ENCODE measurements at regions of chr1 and their contacts with region 1.

Region 1: DNA sequence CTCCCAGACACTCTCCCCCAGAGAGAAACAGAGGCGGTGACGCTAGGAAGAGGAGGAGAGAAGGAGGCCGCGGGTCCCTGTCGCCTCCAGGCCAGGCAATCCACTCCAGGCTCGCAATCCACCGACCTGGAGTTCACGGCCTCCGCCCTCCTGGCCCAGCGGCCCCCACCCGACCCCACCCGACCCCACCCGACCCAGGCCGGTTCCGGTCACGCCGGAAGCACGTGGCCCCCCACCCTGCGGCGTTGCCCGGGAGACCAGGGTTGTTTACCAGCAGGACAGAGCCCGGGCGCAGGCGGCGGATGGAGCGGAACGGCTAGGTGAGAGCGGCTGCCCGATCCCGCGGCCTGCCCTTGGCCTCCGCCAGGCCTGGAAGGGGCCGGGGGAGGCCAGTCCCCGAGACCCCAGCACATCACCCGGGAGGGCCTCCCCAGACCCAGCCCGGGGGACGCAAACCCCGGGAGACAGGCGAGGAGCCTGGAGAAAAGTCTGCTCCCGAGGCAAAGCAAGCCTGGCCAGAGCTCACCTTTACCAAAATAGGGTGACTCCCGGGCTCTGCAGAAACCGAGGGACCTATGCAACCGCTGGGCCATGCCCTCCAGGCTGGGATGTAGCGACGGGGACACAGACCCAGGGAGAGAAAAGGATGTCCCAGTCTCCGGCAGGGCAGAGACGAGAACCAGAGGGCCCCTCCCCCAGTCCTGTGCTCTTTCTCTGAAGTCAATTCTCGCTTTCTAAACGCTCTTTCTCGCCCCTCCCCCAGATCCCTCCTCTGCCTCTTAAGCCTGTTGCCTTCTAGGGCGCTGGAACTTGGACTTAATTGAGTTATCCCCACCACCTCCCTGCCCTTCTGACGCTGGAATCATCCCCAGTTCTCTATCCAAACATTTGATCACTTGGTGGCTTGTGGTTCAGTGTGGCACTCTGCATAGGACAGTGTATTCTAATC is at the starts of genes PLA2G2C and UBXN10:
- DNase-seq: peak; percentile 90
- ATAC-seq: peak; percentile 70
- H3K4me3 Mint-ChIP-seq: peak within 1 kb of the TSS; percentile 68
- H3K27ac Mint-ChIP-seq: peak within 1 kb of the TSS; percentile 85
- H3K4me1 Mint-ChIP-seq: peaks cover 42% of the 10 kb centered on the region
- H3K27me3 Mint-ChIP-seq: peaks cover 15% of the 10 kb centered on the region
- total RNA-seq, gene PLA2G2C: 0.43 to 0.58 TPM
- total RNA-seq, gene UBXN10: 0.41 to 0.63 TPM

Region 2: DNA sequence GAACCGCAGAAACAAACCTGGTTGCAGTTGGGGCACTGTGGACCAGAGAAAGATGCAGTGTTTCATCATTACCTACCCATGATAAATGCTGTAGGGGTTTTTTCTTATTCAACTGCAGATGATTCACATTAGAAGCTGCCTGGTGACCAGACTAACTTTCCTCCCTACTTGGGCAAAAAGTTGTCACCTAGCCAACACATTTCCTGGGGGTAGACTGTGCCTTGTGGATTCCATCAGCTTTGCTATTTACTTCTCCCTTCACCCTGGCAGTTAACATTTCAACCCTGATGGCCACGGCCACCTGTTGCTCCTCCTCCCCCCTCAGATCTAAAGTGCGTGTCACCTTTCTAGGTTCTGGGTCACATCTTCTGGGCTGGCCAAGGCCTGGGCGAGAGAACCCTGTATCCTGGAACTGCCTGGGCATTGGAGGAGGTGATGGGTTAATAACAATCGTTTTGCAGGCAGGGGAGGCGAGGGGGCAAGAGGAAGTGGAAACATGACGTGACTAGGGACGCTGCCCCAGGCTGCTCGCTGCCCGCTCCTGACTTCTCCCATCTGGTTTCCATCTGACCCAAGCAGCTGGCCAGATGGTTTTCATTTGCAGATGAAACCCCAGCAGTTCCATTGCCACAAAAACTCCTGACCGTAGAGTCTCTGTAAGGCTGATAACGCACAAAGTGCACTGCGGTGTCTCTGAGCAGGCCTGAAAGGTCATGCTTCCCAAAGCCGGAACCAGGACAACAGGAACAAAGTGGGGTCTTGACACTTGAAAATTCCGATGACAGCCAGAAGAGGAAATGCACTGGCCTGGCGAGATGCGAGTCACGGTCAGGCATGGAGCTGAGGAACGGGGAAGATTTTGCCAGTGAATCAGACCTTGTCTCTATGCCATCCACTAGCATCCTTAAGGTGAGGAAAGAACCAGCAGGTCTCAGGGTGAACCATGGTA is 737.3 kb before region 1 on chr1:
- CTCF ChIA-PET with region 1: no interaction called
- POLR2A ChIA-PET with region 1: no interaction called
- intact Hi-C with region 1: loop called in 1 of 2 experiments (anchors 5 kb)
- DNase-seq: peak; percentile 65
- ATAC-seq: peak; percentile 77
- H3K4me3 Mint-ChIP-seq: peak overlapping the region; percentile 6
- H3K27ac Mint-ChIP-seq: peak overlapping the region; percentile 92
- H3K4me1 Mint-ChIP-seq: peaks cover 91% of the 10 kb centered on the region
- H3K27me3 Mint-ChIP-seq: no peaks in the 10 kb centered on the region

Region 3: GRCh38 chr1:20151906-20152598 is 34.1 kb before region 1 on chr1:
- CTCF ChIA-PET with region 1: interaction called, 13 read pairs
- POLR2A ChIA-PET with region 1: no interaction called
- intact Hi-C with region 1: no loop called
- DNase-seq: peak; percentile 88
- ATAC-seq: peak; percentile 97
- H3K4me3 Mint-ChIP-seq: peak overlapping the region; percentile 48
- H3K27ac Mint-ChIP-seq: no peak overlapping the region
- H3K4me1 Mint-ChIP-seq: peaks cover 9% of the 10 kb centered on the region
- H3K27me3 Mint-ChIP-seq: no peaks in the 10 kb centered on the region

Region 4: GRCh38 chr1:20248971-20249612 is 63.0 kb after region 1 on chr1:
- CTCF ChIA-PET with region 1: no interaction called
- POLR2A ChIA-PET with region 1: no interaction called
- intact Hi-C with region 1: loop called in 1 of 2 experiments (anchors 2 kb)
- DNase-seq: peak; percentile 71
- ATAC-seq: peak; percentile 91
- H3K4me3 Mint-ChIP-seq: peak overlapping the region; percentile 16
- H3K27ac Mint-ChIP-seq: peak overlapping the region; percentile 84
- H3K4me1 Mint-ChIP-seq: peaks cover 19% of the 10 kb centered on the region
- H3K27me3 Mint-ChIP-seq: peaks cover 4% of the 10 kb centered on the region

Region 5: GRCh38 chr1:20361806-20362640 is 175.9 kb after region 1 on chr1:
- CTCF ChIA-PET with region 1: interaction called, 4 read pairs
- POLR2A ChIA-PET with region 1: no interaction called
- intact Hi-C with region 1: loop called in 1 of 2 experiments (anchors 1 kb)
- DNase-seq: peak; percentile 63
- ATAC-seq: no peak
- H3K4me3 Mint-ChIP-seq: no peak overlapping the region
- H3K27ac Mint-ChIP-seq: no peak overlapping the region
- H3K4me1 Mint-ChIP-seq: peaks cover 20% of the 10 kb centered on the region
- H3K27me3 Mint-ChIP-seq: peaks cover 72% of the 10 kb centered on the region

Region 6: DNA sequence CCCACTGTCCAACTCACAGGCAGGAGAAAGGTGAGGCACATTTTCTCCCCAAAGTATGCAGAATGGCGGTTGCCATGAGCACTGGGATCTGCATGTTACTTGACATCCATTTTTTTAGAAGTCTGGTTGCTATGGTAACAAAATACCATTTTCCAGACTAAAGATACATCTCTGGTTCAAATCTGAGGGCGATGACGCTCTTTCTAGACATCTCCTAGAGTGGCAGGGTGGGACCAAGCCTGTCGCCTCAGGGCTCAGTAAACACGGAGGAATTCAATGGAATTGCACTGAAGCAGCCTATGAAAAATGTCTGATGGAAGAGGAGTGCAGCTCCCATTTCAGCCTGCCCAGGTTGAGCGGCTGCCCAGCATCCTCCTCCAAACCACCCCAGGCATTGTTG is 344.8 kb after region 1 on chr1:
- CTCF ChIA-PET with region 1: no interaction called
- POLR2A ChIA-PET with region 1: no interaction called
- intact Hi-C with region 1: no loop called
- DNase-seq: no peak
- ATAC-seq: no peak
- H3K4me3 Mint-ChIP-seq: no peak overlapping the region
- H3K27ac Mint-ChIP-seq: no peak overlapping the region
- H3K4me1 Mint-ChIP-seq: no peaks in the 10 kb centered on the region
- H3K27me3 Mint-ChIP-seq: peaks cover 52% of the 10 kb centered on the region